Tibial artery (tissue), 4 donors: ENCODE measurements at regions of chr1 and their contacts with region 1.

Region 1: DNA sequence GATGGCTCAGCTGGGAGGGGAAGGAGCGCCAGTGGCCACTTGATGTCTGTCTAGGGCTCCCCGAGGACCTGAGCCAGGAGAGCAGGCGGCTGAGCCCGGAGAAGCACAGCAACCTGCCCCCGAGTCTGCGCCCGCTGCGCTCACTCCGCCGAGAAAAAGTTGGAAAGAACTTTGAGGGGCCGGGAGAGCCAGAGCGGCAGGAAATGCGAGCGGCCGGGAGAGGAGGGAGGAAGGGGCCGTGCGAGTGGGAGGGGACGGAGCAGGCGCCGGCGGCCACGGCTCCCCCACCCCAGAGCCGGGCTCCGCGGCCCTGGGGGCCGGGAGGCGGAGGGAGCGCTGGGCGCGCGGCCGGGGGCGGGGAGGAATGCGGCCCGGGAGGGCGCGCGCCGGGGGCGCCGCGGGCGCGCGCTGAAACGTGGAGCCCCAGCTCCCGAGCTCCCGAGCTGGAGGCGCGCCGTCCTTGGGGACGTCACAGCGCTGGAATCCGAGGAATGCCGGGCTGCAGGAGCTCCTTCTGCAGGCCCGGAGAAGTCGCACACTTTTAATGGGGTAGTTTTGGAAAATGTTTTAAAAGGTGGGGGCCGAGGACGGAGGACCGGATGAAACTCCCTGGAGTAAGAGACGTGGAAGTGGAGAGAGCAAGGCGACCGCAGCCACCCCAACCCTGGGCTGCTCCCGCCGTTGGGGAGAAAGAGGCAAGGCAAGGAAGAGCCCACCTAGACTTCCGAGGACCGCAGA is at the start of gene PTPN14:
- DNase-seq: peak; percentile 78 to 93
- H3K4me3 ChIP-seq: peak within 1 kb of the TSS; percentile 85 to 86
- H3K27ac ChIP-seq: peak within 1 kb of the TSS; percentile 98
- H3K4me1 ChIP-seq: peaks cover 0 to 44% (median 28%) of the 10 kb centered on the region in 4 donors
- H3K27me3 ChIP-seq: no peaks in the 10 kb centered on the region
- CTCF ChIP-seq: peak in 1 of 2 experiments; percentile 30

Region 2: GRCh38 chr1:214397497-214397896 is 154.1 kb before region 1 on chr1:
- intact Hi-C with region 1: loop called (anchors 10 kb)
- DNase-seq: no peak
- H3K4me3 ChIP-seq: no peak overlapping the region
- H3K27ac ChIP-seq: no peak overlapping the region
- H3K4me1 ChIP-seq: no peaks in the 10 kb centered on the region
- H3K27me3 ChIP-seq: no peaks in the 10 kb centered on the region
- CTCF ChIP-seq: no peak